ENCODE measurements at regions of chr17 and their contacts with region 1.

Region 1: GRCh38 chr17:70454377-70454776 is 285.0 kb downstream of the KCNJ2 start:
- DNase-seq: no peak
- H3K4me3 ChIP-seq: no peak overlapping the region
- H3K27ac ChIP-seq: no peak overlapping the region
- H3K4me1 ChIP-seq: no peaks in the 10 kb centered on the region
- H3K27me3 ChIP-seq: no peaks in the 10 kb centered on the region
- CTCF ChIP-seq: no peak
- POLR2A ChIP-seq: no peak

Region 2: DNA sequence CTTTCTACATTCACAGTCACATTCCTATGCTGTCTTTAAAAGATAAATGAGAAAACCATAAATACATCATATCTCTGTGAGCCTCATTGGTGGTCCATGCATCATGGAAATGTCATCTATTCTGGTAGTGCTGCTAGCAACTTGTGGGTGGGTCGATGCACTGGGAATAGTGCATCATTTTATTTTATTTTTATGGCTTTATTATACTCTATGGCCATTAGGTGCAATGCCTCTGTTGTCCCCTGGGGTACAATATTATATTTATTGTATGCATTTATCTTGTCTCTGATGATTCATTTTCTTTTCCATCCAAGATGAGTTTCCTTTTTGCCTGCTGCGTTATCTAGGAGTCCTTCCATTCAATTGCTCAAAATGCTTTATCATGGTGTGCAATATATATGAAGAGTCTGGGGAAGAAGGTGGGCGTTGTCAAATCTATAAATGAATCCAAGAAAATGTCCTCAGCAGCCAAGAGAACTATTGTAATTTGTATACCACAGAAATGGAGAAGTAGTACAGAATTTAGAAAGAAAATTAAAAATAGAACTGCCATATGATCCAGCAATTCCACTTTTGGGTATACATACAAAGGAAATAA is 39.0 kb after region 1 on chr17:
- CTCF ChIA-PET with region 1: interaction called, 3 read pairs
- POLR2A ChIA-PET with region 1: no interaction called
- dilution Hi-C with region 1: no loop called
- intact Hi-C with region 1: loop called (anchors 1 kb)
- DNase-seq: no peak
- H3K4me3 ChIP-seq: no peak overlapping the region
- H3K27ac ChIP-seq: no peak overlapping the region
- H3K4me1 ChIP-seq: no peaks in the 10 kb centered on the region
- H3K27me3 ChIP-seq: no peaks in the 10 kb centered on the region
- CTCF ChIP-seq: no peak
- POLR2A ChIP-seq: no peak

Measured in endothelial cell of umbilical vein (primary cell).